ENCODE measurements at regions of chr5 and their contacts with region 1.

Region 1: DNA sequence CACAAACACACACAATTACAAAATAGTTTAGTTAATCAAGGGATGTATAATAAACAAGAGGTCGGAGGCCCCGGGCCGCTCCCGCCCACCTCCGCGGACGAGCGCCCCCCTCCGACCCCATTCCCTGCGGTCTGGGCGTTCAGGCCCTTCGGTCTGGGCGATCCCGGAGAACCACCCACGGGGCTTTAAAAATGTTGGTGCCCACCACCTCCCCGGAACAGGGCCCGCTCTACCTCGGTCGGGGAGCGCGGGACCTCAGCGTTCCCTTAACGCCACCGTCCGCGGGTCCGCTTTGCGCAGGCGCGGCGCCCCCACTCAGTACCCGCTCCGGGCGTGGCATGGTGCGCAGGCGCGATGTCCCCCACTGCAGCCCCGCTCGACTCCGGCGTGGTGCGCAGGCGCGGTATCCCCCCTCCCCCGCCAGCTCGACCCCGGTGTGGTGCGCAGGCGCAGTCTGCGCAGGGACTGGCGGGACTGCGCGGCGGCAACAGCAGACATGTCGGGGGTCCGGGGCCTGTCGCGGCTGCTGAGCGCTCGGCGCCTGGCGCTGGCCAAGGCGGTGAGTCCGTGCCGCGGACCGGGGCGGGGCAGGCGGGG is at the starts of genes CCDC127 and SDHA:
- DNase-seq: peak; percentile 97
- H3K4me3 Mint-ChIP-seq: peak within 1 kb of the TSS; percentile 90
- H3K27ac Mint-ChIP-seq: peak within 1 kb of the TSS; percentile 94
- H3K4me1 Mint-ChIP-seq: peaks cover 59% of the 10 kb centered on the region
- H3K27me3 Mint-ChIP-seq: no peaks in the 10 kb centered on the region
- total RNA-seq, gene CCDC127: 5.6 to 6.5 TPM
- total RNA-seq, gene SDHA: 144 to 150 TPM

Region 2: GRCh38 chr5:188488-189481 is 29.2 kb before region 1 on chr5:
- CTCF ChIA-PET with region 1: interaction called, 11 read pairs
- POLR2A ChIA-PET with region 1: interaction called, 11 read pairs
- DNase-seq: peak; percentile 90
- H3K4me3 Mint-ChIP-seq: no peak overlapping the region
- H3K27ac Mint-ChIP-seq: no peak overlapping the region
- H3K4me1 Mint-ChIP-seq: peaks cover 9% of the 10 kb centered on the region
- H3K27me3 Mint-ChIP-seq: no peaks in the 10 kb centered on the region

Region 3: DNA sequence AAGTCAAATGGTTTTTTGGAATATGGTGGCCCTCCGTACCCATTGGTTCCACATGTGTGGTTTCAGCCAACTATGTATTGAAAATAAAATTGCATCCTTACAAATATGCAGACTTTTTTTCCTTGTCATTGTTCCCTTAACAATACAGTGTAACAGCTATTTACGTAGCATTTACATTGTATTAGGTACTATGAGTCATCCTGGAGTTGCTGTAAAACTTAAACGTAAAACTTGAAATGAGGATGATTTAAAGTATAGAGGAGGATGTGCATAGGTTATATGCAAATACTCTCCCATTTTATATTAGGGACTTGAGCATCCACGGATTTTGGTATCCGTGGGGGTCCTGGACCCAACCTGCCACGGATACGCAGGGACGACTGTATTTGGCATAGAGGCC is 16.5 kb after region 1 on chr5:
- CTCF ChIA-PET with region 1: no interaction called
- POLR2A ChIA-PET with region 1: interaction called, 13 read pairs
- DNase-seq: no peak
- H3K4me3 Mint-ChIP-seq: no peak overlapping the region
- H3K27ac Mint-ChIP-seq: no peak overlapping the region
- H3K4me1 Mint-ChIP-seq: peaks cover 1% of the 10 kb centered on the region
- H3K27me3 Mint-ChIP-seq: no peaks in the 10 kb centered on the region

Region 4: GRCh38 chr5:270340-270739 is 52.4 kb after region 1 on chr5:
- CTCF ChIA-PET with region 1: interaction called, 5 read pairs
- POLR2A ChIA-PET with region 1: interaction called, 28 read pairs
- DNase-seq: no peak
- H3K4me3 Mint-ChIP-seq: peak overlapping the region; percentile 83
- H3K27ac Mint-ChIP-seq: peak overlapping the region; percentile 62
- H3K4me1 Mint-ChIP-seq: peaks cover 42% of the 10 kb centered on the region
- H3K27me3 Mint-ChIP-seq: no peaks in the 10 kb centered on the region